CD4-positive, alpha-beta T cell (primary cell): ENCODE measurements at regions of chr15 and their contacts with region 1.

Region 1: DNA sequence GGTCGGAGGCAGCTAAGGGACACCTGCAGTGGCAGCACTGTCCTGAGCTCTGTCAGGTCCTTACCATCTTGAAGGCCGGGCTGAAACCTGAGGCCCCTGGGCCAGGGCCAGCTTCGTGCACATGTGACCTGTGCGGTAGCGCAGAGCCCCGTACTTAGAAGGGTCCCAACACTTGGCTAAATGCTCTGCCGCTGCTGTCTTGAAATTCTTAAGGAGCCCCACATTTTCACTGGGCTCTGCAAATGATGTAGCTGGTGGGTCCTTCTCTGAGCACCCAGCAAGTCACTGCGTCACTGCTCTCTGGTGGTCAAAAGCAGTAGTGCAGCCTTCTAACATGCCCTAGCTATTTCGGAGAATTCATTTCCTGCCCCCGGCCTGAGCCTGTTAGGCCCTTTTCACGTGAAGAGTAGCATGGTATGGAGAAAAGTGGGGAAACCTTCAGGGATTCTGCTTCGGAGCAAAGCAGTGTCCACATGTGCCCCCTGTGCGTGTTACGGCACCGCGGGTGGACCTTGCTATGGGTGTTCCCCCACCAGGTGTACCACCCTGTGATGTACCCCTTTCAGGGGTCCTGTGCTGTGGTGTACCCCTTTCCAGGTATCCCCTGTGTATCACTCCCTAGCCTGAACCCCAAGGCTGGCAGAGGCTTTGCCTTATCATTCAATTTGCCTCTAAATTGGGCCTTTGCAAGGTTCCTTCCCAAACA is 79.7 kb downstream of the TMEM266 start:
- DNase-seq: peak; percentile 48 to 79 (median 62)
- ATAC-seq: peak; percentile 89
- H3K4me3 ChIP-seq: no peak overlapping the region
- H3K4me3 Mint-ChIP-seq: no peak overlapping the region
- H3K27ac ChIP-seq: no peak overlapping the region
- H3K27ac Mint-ChIP-seq: no peak overlapping the region
- H3K4me1 ChIP-seq: peaks cover 8% of the 10 kb centered on the region
- H3K4me1 Mint-ChIP-seq: no peaks in the 10 kb centered on the region
- H3K27me3 ChIP-seq: peaks cover 15 to 16% of the 10 kb centered on the region in 2 experiments
- H3K27me3 Mint-ChIP-seq: peaks cover 24% of the 10 kb centered on the region
- CTCF ChIP-seq: peak; percentile 88

Region 2: GRCh38 chr15:75138016-75138999 is 1001.2 kb before region 1 on chr15:
- CTCF ChIA-PET with region 1: no interaction called
- POLR2A ChIA-PET with region 1: no interaction called
- intact Hi-C with region 1: no loop called
- DNase-seq: no peak
- ATAC-seq: no peak
- H3K4me3 ChIP-seq: no peak overlapping the region
- H3K4me3 Mint-ChIP-seq: no peak overlapping the region
- H3K27ac ChIP-seq: no peak overlapping the region
- H3K27ac Mint-ChIP-seq: no peak overlapping the region
- H3K4me1 ChIP-seq: no peaks in the 10 kb centered on the region
- H3K4me1 Mint-ChIP-seq: no peaks in the 10 kb centered on the region
- H3K27me3 ChIP-seq: no peaks in the 10 kb centered on the region
- H3K27me3 Mint-ChIP-seq: no peaks in the 10 kb centered on the region
- CTCF ChIP-seq: no peak

Region 3: DNA sequence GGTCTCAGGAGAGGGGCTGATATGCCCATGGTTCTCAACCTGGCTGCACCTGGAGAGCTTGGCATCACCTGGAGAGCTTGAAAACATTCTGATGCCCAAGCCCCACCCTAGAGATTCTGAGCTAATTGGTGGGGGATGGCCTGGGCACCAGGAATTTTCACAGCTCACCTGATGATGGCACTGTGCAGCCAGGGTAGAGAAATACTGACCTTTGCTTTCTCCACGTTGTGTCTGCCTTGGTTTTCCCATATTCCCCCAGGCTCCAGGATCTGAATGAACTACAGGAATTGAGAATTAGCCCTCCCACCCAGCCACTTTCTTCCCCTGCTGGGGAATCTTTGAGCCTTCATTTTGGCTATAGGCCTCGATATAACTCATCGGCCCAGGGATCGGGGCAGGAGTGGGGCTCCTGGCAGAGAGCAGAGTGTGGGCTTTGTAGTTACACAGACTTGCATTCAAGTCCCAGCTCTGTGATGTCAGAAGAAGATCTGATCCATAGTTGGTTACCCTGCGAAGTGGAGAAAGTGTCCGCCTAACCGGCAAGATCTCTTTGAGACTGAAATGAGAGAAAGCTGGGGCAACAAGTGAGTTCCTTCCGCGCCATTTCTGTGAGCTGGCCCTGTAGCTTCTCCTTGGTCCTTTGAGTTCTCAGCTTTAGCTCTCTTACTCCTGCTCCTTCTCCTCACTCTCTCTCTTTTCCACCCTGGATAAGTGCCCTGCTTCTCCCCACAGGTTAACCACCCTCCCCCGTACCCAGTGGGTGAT is 329.4 kb before region 1 on chr15:
- CTCF ChIA-PET with region 1: interaction called, 9 read pairs
- POLR2A ChIA-PET with region 1: no interaction called
- intact Hi-C with region 1: loop called in 1 of 2 experiments (anchors 1 kb)
- DNase-seq: peak in 5 of 14 experiments; percentile 3 to 47 (median 29)
- ATAC-seq: no peak
- H3K4me3 ChIP-seq: no peak overlapping the region
- H3K4me3 Mint-ChIP-seq: no peak overlapping the region
- H3K27ac ChIP-seq: no peak overlapping the region
- H3K27ac Mint-ChIP-seq: no peak overlapping the region
- H3K4me1 ChIP-seq: no peaks in the 10 kb centered on the region
- H3K4me1 Mint-ChIP-seq: no peaks in the 10 kb centered on the region
- H3K27me3 ChIP-seq: peaks cover 0 to 4% of the 10 kb centered on the region in 2 experiments
- H3K27me3 Mint-ChIP-seq: no peaks in the 10 kb centered on the region
- CTCF ChIP-seq: no peak

Region 4: DNA sequence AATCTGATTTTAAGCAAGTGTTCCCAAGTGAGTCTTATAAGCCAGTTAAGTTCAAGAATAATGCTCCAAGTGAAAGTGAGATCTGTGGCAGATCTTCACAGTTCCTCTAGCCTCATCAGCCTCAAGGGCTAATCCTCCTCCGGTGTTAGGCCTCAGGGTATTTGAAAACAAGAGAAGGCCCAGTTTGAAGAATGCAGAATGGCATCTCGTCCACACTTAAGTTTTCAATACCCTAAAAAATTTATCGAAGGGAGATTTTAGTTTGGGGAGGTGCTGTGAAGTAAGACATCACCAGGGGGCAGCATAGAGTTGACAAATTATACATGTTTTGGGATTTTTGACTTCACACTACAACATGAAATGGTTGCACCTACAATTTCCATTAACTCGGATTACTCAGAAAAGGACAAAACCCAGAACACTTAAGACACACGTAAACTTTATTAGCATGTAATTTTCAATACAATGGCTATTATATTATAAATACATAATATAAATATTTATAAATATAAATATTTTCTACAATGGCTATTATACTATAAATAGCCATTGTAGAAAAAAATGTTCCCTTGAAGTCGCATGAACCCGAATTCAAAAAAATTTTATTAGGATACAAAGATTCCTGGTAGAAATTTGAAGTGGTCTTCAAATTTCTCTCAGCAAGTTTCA is 82.1 kb before region 1 on chr15:
- CTCF ChIA-PET with region 1: interaction called, 11 read pairs
- POLR2A ChIA-PET with region 1: no interaction called
- intact Hi-C with region 1: loop called (anchors 1 to 2 kb)
- DNase-seq: peak in 7 of 14 experiments; percentile 7 to 72 (median 42)
- ATAC-seq: peak; percentile 51
- H3K4me3 ChIP-seq: no peak overlapping the region
- H3K4me3 Mint-ChIP-seq: no peak overlapping the region
- H3K27ac ChIP-seq: no peak overlapping the region
- H3K27ac Mint-ChIP-seq: no peak overlapping the region
- H3K4me1 ChIP-seq: peaks cover 20% of the 10 kb centered on the region
- H3K4me1 Mint-ChIP-seq: peaks cover 23% of the 10 kb centered on the region
- H3K27me3 ChIP-seq: peaks cover 31 to 53% of the 10 kb centered on the region in 2 experiments
- H3K27me3 Mint-ChIP-seq: peaks cover 61% of the 10 kb centered on the region
- CTCF ChIP-seq: peak; percentile 82

Region 5: GRCh38 chr15:76150971-76151598 is 11.6 kb after region 1 on chr15:
- CTCF ChIA-PET with region 1: interaction called, 23 read pairs
- POLR2A ChIA-PET with region 1: no interaction called
- intact Hi-C with region 1: no loop called
- DNase-seq: peak; percentile 51 to 84 (median 66)
- ATAC-seq: peak; percentile 86
- H3K4me3 ChIP-seq: no peak overlapping the region
- H3K4me3 Mint-ChIP-seq: no peak overlapping the region
- H3K27ac ChIP-seq: no peak overlapping the region
- H3K27ac Mint-ChIP-seq: no peak overlapping the region
- H3K4me1 ChIP-seq: peaks cover 15% of the 10 kb centered on the region
- H3K4me1 Mint-ChIP-seq: peaks cover 6% of the 10 kb centered on the region
- H3K27me3 ChIP-seq: peaks cover 0 to 13% of the 10 kb centered on the region in 2 experiments
- H3K27me3 Mint-ChIP-seq: peaks cover 16% of the 10 kb centered on the region
- CTCF ChIP-seq: peak; percentile 92